Caco-2 (cell line): ENCODE measurements at regions of chr1 and their contacts with region 1.

Region 1: DNA sequence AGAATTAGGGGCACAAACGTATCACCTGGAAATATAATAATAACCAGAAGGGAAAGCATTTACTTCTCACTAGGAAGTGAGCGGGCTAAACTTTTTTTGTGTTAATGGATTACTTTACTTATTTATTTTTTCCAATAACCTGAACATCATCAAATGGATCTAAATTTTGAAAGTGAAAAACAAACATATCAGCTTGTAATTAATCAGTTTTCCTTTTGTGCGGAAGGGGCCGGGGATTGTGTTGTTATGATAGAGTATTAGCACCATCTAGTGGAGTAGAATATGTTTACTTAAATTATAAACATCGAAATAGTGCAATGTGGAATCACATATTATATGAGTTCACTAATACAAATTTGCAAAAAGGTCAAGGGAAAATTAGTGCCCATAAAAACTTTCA is 9.0 kb downstream of the CFH start:
- DNase-seq: peak in 1 of 2 experiments; percentile 5
- H3K4me3 ChIP-seq: no peak overlapping the region
- H3K4me3 Mint-ChIP-seq: no peak overlapping the region
- H3K27ac Mint-ChIP-seq: no peak overlapping the region
- H3K4me1 ChIP-seq: no peaks in the 10 kb centered on the region
- H3K4me1 Mint-ChIP-seq: no peaks in the 10 kb centered on the region
- H3K27me3 ChIP-seq: no peaks in the 10 kb centered on the region
- H3K27me3 Mint-ChIP-seq: no peaks in the 10 kb centered on the region
- CTCF ChIP-seq: peak; percentile 17 to 47

Region 2: GRCh38 chr1:196317535-196318522 is 343.0 kb before region 1 on chr1:
- CTCF ChIA-PET with region 1: no interaction called
- POLR2A ChIA-PET with region 1: no interaction called
- intact Hi-C with region 1: loop called (anchors 1 kb)
- DNase-seq: peak; percentile 39 to 41
- H3K4me3 ChIP-seq: no peak overlapping the region
- H3K4me3 Mint-ChIP-seq: no peak overlapping the region
- H3K27ac Mint-ChIP-seq: no peak overlapping the region
- H3K4me1 ChIP-seq: no peaks in the 10 kb centered on the region
- H3K4me1 Mint-ChIP-seq: no peaks in the 10 kb centered on the region
- H3K27me3 ChIP-seq: no peaks in the 10 kb centered on the region
- H3K27me3 Mint-ChIP-seq: no peaks in the 10 kb centered on the region
- CTCF ChIP-seq: peak; percentile 48 to 64

Region 3: GRCh38 chr1:196355206-196355786 is 305.6 kb before region 1 on chr1:
- CTCF ChIA-PET with region 1: no interaction called
- POLR2A ChIA-PET with region 1: no interaction called
- intact Hi-C with region 1: loop called (anchors 1 kb)
- DNase-seq: peak in 1 of 2 experiments; percentile 9
- H3K4me3 ChIP-seq: no peak overlapping the region
- H3K4me3 Mint-ChIP-seq: no peak overlapping the region
- H3K27ac Mint-ChIP-seq: no peak overlapping the region
- H3K4me1 ChIP-seq: no peaks in the 10 kb centered on the region
- H3K4me1 Mint-ChIP-seq: no peaks in the 10 kb centered on the region
- H3K27me3 ChIP-seq: no peaks in the 10 kb centered on the region
- H3K27me3 Mint-ChIP-seq: no peaks in the 10 kb centered on the region
- CTCF ChIP-seq: peak; percentile 21 to 25

Region 4: GRCh38 chr1:196861429-196861828 is 200.6 kb after region 1 on chr1:
- CTCF ChIA-PET with region 1: no interaction called
- POLR2A ChIA-PET with region 1: no interaction called
- intact Hi-C with region 1: no loop called
- DNase-seq: no peak
- H3K4me3 ChIP-seq: no peak overlapping the region
- H3K4me3 Mint-ChIP-seq: no peak overlapping the region
- H3K27ac Mint-ChIP-seq: no peak overlapping the region
- H3K4me1 ChIP-seq: no peaks in the 10 kb centered on the region
- H3K4me1 Mint-ChIP-seq: no peaks in the 10 kb centered on the region
- H3K27me3 ChIP-seq: no peaks in the 10 kb centered on the region
- H3K27me3 Mint-ChIP-seq: no peaks in the 10 kb centered on the region
- CTCF ChIP-seq: no peak